Activated T-helper 2 cell treated with anti-CD3 and anti-CD28 coated beads, Interferon-gamma antibody, Interleukin-2, Interleukin-4, amounts not matched to agents 10 μg/mL and 5 μg/mL and 100 μg/mL, durations not matched to agents 14 hours and 24 hours and 36 hours (primary cell): ENCODE measurements at regions of chr1 and their contacts with region 1.

Region 1: GRCh38 chr1:21294266-21294989 is 4.2 kb upstream of the ECE1 start:
- DNase-seq: peak; percentile 82
- H3K4me3 Mint-ChIP-seq: peak overlapping the region; percentile 63
- H3K27ac Mint-ChIP-seq: peak overlapping the region; percentile 91
- H3K4me1 Mint-ChIP-seq: peaks cover 72% of the 10 kb centered on the region
- H3K27me3 Mint-ChIP-seq: no peaks in the 10 kb centered on the region

Region 2: DNA sequence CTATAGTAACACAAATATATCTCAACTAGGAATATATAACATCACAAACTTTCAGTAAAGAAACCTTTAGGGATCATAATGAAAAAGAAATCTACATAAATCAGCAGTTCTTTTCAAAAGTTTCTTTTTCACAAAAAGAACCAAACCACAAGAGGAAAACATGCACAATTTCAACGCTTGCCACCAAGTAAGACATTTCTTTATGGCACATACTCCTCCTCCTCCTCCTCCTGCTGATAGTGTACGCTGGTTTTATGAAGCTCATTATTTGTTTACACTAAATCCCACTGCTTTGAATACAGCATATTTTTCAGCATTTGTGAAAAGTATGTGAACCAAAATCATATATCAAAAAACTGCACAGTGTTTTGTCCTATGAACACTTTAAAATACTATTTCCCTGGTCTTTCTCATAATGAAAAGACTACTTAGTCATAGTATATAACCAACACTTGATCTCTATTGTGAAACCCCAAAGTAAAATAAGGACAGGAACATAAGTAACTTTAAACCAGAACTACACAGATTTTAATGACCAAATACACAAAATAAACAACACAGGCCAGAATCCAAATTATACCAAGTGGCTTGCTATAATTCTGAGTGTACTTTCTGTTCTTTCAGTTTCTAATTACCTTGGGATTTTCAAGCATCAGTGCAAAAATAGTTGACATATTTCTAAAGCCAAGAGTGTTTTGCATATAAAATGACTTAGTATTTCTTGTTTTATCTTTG is 301.9 kb before region 1 on chr1:
- intact Hi-C with region 1: loop called (anchors 10 kb)
- DNase-seq: no peak
- H3K4me3 Mint-ChIP-seq: peak overlapping the region; percentile 55
- H3K27ac Mint-ChIP-seq: peak overlapping the region; percentile 92
- H3K4me1 Mint-ChIP-seq: peaks cover 45% of the 10 kb centered on the region
- H3K27me3 Mint-ChIP-seq: no peaks in the 10 kb centered on the region

Region 3: GRCh38 chr1:21149862-21150432 is 144.5 kb before region 1 on chr1:
- intact Hi-C with region 1: no loop called
- DNase-seq: no peak
- H3K4me3 Mint-ChIP-seq: no peak overlapping the region
- H3K27ac Mint-ChIP-seq: no peak overlapping the region
- H3K4me1 Mint-ChIP-seq: peaks cover 11% of the 10 kb centered on the region
- H3K27me3 Mint-ChIP-seq: no peaks in the 10 kb centered on the region

Region 4: DNA sequence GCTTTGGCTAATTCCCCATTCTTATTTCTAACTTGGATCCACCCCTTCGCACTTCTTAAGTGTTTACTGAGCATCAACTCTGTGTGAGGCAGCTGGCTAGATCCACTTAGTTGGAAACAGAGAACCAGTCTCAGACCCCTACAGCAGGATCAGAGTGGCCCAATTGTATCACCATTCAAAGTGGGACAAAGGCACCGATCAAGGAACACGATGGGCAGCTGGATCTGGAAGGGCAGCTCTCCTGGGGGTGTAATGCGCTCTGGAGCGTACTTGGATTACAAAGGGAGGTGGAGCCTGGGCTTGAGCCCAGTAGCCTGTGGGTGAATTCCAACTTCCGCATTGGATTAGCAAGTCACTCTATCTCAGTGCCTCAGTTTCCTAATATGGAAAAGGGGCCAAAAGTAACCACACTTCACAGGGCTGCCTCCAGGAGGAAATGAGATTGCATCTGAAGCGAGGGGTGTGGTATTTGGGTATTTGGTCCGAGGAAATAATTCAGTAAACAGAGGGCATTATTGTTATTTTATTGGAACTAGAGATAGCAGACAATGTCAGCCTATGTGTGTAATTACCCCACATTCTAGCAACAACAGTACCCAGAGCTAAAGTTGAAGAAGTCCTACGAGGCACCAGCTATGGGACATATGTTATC is 16.1 kb before region 1 on chr1:
- intact Hi-C with region 1: loop called (anchors 2 kb)
- DNase-seq: no peak
- H3K4me3 Mint-ChIP-seq: no peak overlapping the region
- H3K27ac Mint-ChIP-seq: no peak overlapping the region
- H3K4me1 Mint-ChIP-seq: peaks cover 35% of the 10 kb centered on the region
- H3K27me3 Mint-ChIP-seq: no peaks in the 10 kb centered on the region

Region 5: GRCh38 chr1:21318714-21319159 is 24.3 kb after region 1 on chr1:
- intact Hi-C with region 1: no loop called
- DNase-seq: no peak
- H3K4me3 Mint-ChIP-seq: no peak overlapping the region
- H3K27ac Mint-ChIP-seq: no peak overlapping the region
- H3K4me1 Mint-ChIP-seq: peaks cover 19% of the 10 kb centered on the region
- H3K27me3 Mint-ChIP-seq: no peaks in the 10 kb centered on the region

Region 6: DNA sequence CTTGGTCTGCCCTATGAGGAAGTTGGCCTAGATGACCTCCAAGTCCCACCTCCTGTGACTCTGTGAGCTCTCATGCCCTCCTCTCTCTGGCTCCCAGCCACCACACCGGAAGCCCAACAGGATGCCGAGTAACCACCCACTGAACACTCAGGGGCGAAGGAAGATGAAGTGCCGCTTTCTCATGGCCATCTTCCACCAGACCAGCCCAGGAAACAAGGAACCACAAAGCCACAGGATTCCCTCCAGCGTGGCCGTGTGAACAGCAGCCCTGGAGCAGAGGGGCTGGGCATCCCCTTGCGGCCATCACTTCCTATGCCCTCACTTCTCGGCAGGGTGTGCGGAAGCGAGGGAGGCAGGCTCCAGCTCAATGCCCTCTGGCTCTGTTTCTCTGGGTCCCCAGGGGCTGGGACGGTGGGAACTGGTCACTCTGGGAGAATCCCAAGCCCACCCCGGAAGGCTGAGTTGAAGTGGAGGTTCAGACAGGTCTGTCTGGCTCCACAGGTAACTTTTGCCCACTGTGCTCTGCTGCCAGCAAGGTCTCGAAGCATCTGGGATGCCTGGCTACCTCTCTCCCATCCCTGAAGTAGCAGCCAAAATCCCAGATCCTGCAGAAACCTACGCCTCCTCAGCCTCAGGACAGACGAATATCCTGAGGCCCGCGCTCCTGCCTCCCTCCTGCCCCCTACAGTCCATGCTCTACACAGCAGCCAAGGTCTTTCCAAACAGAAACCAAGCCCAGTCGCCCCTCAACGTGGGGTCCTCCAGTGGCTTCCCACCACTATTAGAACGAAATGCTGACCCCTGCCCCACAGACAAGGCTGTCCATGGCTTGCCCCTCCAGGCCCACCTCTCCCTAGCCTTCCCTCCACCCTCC is 40.0 kb after region 1 on chr1:
- intact Hi-C with region 1: loop called (anchors 1 kb)
- DNase-seq: peak; percentile 79
- H3K4me3 Mint-ChIP-seq: peak overlapping the region; percentile 80
- H3K27ac Mint-ChIP-seq: peak overlapping the region; percentile 91
- H3K4me1 Mint-ChIP-seq: peaks cover 60% of the 10 kb centered on the region
- H3K27me3 Mint-ChIP-seq: no peaks in the 10 kb centered on the region

Region 7: GRCh38 chr1:21355956-21356355 is 61.5 kb after region 1 on chr1:
- intact Hi-C with region 1: no loop called
- DNase-seq: no peak
- H3K4me3 Mint-ChIP-seq: no peak overlapping the region
- H3K27ac Mint-ChIP-seq: no peak overlapping the region
- H3K4me1 Mint-ChIP-seq: peaks cover 3% of the 10 kb centered on the region
- H3K27me3 Mint-ChIP-seq: peaks cover 8% of the 10 kb centered on the region

Region 8: DNA sequence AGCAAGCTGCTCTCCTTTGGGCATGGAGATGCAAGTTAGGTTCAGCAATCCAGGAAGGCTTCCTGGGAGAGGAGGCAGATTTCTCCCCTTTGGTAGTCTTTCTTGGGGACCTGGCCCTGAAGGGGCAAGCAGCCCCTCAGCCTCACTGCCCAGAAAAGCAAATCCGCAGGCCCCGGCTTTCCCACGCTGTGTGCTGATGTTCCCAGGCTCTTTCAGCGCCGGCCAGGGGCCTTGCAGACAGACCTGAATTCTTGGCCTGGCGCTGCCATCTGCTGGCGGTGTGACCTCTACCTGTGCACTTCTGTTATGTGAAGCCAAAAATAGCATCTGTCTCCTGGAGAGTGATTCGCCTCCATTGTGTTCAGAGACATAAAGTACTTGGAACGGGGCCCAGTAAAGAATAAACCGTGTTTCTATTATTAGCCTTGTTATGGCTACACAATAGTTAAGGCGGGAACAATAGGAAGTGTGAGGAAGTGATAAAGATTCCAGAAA is 279.6 kb after region 1 on chr1:
- intact Hi-C with region 1: no loop called
- DNase-seq: no peak
- H3K4me3 Mint-ChIP-seq: no peak overlapping the region
- H3K27ac Mint-ChIP-seq: no peak overlapping the region
- H3K4me1 Mint-ChIP-seq: no peaks in the 10 kb centered on the region
- H3K27me3 Mint-ChIP-seq: no peaks in the 10 kb centered on the region

Region 9: DNA sequence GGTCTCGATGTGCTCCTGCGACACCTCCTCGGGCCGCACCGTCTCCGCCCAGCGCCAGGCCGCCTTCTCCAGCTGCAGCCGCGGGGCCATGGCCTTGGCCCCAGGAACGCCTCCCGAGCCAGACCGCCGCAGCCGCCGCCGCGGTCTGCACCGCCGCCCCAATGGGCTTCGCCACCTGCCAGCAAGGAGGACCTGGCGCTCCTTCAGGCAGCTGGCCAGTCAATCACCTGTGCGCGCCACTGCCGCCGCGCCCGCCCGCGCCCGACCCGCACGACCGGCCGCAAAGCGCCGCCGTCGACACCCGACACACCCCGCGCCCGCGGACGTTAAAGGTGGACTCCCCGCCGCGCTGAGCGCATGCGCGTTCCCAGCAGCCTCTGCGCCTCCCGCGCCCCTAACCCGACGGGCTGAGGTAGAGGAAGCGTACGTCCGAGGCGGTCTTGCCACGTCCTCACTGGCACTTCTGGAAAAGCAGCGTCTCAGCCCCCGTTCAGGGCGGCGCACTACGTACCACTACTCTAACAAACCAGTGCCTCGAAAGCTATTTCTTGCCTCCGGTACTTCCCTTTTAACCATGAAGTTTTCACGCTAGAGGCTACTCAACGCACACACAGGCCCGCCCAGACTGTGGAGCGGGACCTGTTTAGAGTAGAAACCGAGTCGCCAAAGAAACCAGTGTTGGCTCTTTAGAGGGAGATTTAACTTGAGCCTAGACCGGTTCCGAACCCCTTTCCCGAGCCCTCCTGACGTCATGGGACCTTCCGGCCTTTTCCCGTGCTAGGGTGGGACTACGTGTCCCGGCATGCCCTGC is 488.6 kb after region 1 on chr1 and contains the start of gene USP48:
- intact Hi-C with region 1: loop called (anchors 5 kb)
- DNase-seq: peak; percentile 98
- H3K4me3 Mint-ChIP-seq: peak within 1 kb of the TSS; percentile 96
- H3K27ac Mint-ChIP-seq: peak within 1 kb of the TSS; percentile 100
- H3K4me1 Mint-ChIP-seq: peaks cover 19% of the 10 kb centered on the region
- H3K27me3 Mint-ChIP-seq: peaks cover 4% of the 10 kb centered on the region
- total RNA-seq, gene USP48: 101 TPM in 2 replicates